ENCODE measurements at regions of chr3 and their contacts with region 1.

Region 1: GRCh38 chr3:127544192-127544802 is 46.2 kb downstream of the TPRA1 start:
- DNase-seq: peak; percentile 80
- H3K4me3 Mint-ChIP-seq: no peak overlapping the region
- H3K27ac Mint-ChIP-seq: no peak overlapping the region
- H3K4me1 Mint-ChIP-seq: peaks cover 6% of the 10 kb centered on the region
- H3K27me3 Mint-ChIP-seq: peaks cover 17% of the 10 kb centered on the region
- CTCF ChIP-seq: peak; percentile 84

Region 2: DNA sequence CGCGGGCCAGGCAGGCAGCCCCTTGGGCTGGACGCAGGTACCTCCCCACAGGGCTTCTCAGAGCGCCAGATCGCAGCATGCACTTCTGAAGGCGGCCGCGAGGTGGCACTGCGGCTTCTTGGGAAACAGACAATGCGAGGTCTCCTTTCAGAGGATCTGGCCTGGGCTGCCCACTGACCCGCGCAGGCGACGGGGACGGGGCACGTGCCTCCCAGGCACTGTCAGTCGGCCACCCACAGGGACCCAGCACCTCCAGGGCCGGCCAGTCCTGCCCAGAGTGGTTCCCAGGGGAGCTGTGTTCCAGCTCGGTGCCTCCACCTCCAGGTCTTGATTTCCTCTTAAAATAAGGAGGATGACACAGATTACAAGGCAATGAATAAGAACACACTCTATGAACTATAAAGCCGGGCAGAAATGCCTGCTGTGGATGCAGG is 865.0 kb before region 1 on chr3:
- CTCF ChIA-PET with region 1: interaction called, 63 read pairs
- POLR2A ChIA-PET with region 1: interaction called, 3 read pairs
- intact Hi-C with region 1: loop called (anchors 1 kb)
- DNase-seq: peak; percentile 80
- H3K4me3 Mint-ChIP-seq: no peak overlapping the region
- H3K27ac Mint-ChIP-seq: no peak overlapping the region
- H3K4me1 Mint-ChIP-seq: no peaks in the 10 kb centered on the region
- H3K27me3 Mint-ChIP-seq: peaks cover 17% of the 10 kb centered on the region
- CTCF ChIP-seq: peak; percentile 98

Region 3: GRCh38 chr3:127254730-127255129 is 289.6 kb before region 1 on chr3:
- CTCF ChIA-PET with region 1: interaction called, 3 read pairs
- POLR2A ChIA-PET with region 1: no interaction called
- intact Hi-C with region 1: loop called (anchors 10 kb)
- DNase-seq: peak; percentile 74
- H3K4me3 Mint-ChIP-seq: no peak overlapping the region
- H3K27ac Mint-ChIP-seq: no peak overlapping the region
- H3K4me1 Mint-ChIP-seq: peaks cover 11% of the 10 kb centered on the region
- H3K27me3 Mint-ChIP-seq: no peaks in the 10 kb centered on the region
- CTCF ChIP-seq: peak; percentile 58

Region 4: DNA sequence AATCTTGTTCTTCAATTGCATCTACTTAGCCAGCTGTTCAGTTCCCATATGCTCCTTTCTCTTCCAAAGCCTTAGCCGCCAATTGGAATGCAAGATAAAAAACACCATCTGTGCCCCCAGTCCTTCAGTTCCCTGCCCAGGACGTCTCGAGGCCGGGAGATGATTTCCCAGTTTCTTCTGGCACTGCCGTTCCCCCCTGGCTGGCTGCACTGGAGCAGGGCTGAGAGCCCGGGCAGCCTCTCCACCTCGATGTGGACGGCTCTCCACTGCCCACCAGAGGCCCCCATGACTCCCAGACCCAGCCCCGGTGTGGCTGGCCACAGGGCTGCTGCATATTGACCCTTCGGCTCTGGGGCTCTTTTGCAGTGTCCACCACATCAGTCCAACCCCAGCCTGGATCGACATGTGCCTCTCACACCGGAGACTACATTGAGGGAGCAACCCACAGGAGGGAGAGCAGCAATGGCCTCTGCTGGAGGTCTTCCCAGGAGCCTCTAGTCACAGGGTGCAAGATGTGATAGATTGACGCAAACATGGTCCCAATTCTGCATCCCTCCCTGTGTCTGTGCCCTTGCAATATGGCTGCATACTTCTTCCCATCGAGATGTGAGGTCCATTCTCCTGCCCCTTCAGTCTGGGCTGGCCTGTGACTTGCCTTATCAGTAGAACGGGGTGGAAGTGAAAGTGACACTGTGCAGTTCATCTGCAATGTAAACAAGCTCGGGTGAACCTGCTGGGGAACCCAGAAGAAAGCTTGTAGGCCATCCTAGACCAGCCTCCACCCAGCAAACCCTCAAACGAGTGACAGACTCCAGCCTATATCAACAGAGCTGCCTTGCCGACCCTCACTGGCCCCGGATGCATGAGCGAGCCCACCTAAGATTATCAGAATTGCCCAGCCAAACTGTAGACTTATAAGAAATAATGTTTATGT is 204.1 kb before region 1 on chr3:
- CTCF ChIA-PET with region 1: no interaction called
- POLR2A ChIA-PET with region 1: no interaction called
- intact Hi-C with region 1: no loop called
- DNase-seq: no peak
- H3K4me3 Mint-ChIP-seq: no peak overlapping the region
- H3K27ac Mint-ChIP-seq: no peak overlapping the region
- H3K4me1 Mint-ChIP-seq: no peaks in the 10 kb centered on the region
- H3K27me3 Mint-ChIP-seq: no peaks in the 10 kb centered on the region
- CTCF ChIP-seq: no peak

Region 5: DNA sequence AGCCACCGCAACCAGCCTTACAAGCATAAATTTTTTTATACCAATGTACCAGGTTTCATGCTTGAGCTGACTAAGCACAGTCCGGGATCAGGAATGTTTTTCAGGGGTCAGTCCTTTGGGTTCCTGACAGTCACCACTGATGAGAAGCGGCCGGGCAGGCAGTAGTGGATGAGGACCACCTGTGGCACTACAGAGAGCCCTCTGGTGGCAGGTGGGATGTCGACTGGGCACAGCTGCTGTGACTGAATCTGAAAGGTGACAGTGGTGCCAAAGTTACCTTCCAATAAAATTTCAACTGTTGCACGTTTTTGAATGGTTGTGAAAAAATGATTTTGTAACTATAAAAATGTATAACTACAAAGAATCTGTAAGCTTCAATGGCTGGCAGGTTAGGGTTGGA is 12.3 kb after region 1 on chr3:
- CTCF ChIA-PET with region 1: interaction called, 11 read pairs
- POLR2A ChIA-PET with region 1: no interaction called
- intact Hi-C with region 1: no loop called
- DNase-seq: no peak
- H3K4me3 Mint-ChIP-seq: no peak overlapping the region
- H3K27ac Mint-ChIP-seq: no peak overlapping the region
- H3K4me1 Mint-ChIP-seq: no peaks in the 10 kb centered on the region
- H3K27me3 Mint-ChIP-seq: no peaks in the 10 kb centered on the region
- CTCF ChIP-seq: no peak